AG04449 (cell line): ENCODE measurements at regions of chr9 and their contacts with region 1.

Region 1: DNA sequence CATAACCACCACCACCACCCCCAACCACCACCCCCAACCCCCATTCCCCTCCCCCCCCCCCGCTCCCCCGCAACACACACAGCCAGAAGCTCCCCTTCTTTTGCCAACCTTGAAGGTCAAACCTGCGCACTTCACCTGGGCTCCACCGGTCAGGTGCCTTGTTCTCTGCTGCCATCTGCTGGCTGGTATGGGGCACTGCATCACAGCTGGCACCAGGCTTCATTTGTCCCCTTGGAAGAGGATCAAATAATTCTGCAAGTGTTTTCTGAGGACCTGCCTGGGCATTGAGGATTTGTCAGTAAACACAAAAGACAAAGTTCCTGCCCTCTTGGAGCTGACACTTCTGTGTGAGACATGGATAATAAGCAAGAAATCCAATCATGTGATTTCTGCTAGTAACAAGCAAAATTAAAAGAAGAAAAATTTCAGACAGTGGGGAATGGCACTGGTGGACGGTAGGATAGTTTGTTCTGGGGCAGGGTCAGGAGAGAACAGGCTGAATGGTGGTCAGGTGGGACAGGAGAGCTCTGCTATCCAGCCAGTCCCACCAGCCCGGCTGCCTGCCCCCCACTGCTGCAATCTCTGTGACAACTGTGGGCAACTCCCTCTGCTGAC is 55.6 kb upstream of the LMX1B start:
- DNase-seq: no peak
- H3K4me3 ChIP-seq: no peak overlapping the region
- CTCF ChIP-seq: peak; percentile 92

Region 2: DNA sequence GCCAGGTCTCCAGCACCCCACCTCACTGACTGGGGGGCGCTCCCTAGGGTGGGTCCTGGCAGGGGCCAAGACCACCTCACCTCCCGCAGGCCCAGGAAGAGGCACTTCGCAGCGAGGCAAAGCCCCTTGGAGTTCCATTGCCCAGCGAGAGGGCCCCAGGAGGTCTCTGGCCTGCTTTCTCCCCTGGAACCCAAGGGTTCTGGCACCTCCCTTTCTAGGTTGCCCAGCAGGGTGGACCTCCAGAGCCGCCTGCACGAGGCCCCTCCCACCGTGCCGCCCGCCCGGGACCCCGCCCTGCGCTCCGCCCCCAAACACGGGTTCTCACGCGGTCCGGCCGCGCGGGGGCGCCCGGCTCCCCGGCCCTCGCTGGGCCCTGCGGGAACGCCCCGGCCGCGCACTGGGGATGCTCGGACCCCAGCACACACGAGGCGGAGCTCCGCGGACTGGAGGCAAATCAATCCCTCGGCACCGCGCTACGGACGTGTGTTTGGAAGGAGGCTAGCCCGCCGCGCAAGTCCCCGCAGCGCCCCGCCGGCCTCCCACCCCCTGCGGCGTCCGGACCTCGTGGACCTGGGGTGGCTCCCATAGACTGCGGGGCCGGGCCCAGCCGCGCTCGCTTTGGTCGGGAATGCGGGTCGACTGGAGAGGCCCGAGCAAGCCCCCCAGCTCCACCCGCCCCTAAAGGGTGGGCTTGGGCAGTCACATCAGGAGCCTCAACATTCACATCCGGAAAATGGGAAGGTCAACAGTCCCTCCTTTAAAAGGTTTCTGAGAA is 43.9 kb before region 1 on chr9:
- CTCF ChIA-PET with region 1: interaction called, 118 read pairs
- POLR2A ChIA-PET with region 1: no interaction called
- DNase-seq: no peak
- H3K4me3 ChIP-seq: peak overlapping the region; percentile 39
- CTCF ChIP-seq: peak; percentile 50

Region 3: GRCh38 chr9:126538550-126538949 is 19.6 kb before region 1 on chr9:
- CTCF ChIA-PET with region 1: interaction called, 16 read pairs
- POLR2A ChIA-PET with region 1: no interaction called
- DNase-seq: no peak
- H3K4me3 ChIP-seq: no peak overlapping the region
- CTCF ChIP-seq: no peak

Region 4: GRCh38 chr9:126569036-126569435 is 10.9 kb after region 1 on chr9:
- CTCF ChIA-PET with region 1: interaction called, 55 read pairs
- POLR2A ChIA-PET with region 1: no interaction called
- DNase-seq: no peak
- H3K4me3 ChIP-seq: no peak overlapping the region
- CTCF ChIP-seq: no peak